Endothelial cell of umbilical vein (primary cell): ENCODE measurements at regions of chr3 and their contacts with region 1.

Region 1: DNA sequence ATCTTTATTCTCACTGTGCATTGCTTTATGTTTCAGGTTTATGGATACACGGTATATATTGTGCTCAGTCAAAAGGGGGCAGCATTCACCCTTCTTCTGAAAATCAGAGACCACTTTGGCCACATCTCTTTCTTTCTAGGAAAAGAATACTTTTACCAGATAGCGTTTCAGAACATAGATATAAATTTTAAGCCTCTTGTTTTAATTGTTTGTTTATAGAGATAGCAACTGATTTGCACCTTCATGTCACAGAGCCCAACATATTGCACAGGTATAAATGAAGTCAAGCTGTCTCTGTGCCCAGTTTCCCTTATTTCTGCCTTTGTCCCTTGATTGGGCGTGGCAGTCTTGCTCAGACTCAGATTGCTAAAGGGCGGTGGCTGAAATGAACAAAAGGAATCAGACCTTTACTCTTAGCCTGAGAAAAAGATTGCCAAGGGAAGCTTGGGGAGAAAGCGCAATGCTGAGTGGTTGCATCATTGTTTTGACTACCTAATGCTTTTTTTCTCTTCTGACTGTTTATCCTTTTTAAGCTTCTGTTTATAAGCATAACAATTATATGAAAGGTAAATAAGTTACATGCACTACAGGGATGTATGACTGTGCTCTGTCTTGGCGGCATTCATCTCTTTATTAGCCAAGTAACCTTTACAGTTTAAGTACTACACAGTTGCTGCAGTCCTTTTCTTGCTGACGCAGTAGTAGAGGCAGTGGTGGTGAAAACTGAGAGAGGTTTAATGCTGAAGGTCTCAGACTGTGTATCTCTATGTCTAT is 70.8 kb upstream of the ZBTB20 start:
- DNase-seq: peak; percentile 75
- H3K4me3 ChIP-seq: peak overlapping the region in 1 of 3 experiments; percentile 12
- H3K27ac ChIP-seq: no peak overlapping the region
- H3K4me1 ChIP-seq: peaks cover 10% of the 10 kb centered on the region
- H3K27me3 ChIP-seq: no peaks in the 10 kb centered on the region
- CTCF ChIP-seq: peak; percentile 44 to 51
- POLR2A ChIP-seq: no peak

Region 2: GRCh38 chr3:114928989-114929640 is 288.8 kb before region 1 on chr3:
- CTCF ChIA-PET with region 1: no interaction called
- POLR2A ChIA-PET with region 1: no interaction called
- dilution Hi-C with region 1: no loop called
- intact Hi-C with region 1: no loop called
- DNase-seq: no peak
- H3K4me3 ChIP-seq: no peak overlapping the region
- H3K27ac ChIP-seq: no peak overlapping the region
- H3K4me1 ChIP-seq: no peaks in the 10 kb centered on the region
- H3K27me3 ChIP-seq: no peaks in the 10 kb centered on the region
- CTCF ChIP-seq: no peak
- POLR2A ChIP-seq: no peak

Region 3: GRCh38 chr3:115239717-115240116 is 21.9 kb after region 1 on chr3:
- CTCF ChIA-PET with region 1: interaction called, 7 read pairs
- POLR2A ChIA-PET with region 1: no interaction called
- dilution Hi-C with region 1: no loop called
- intact Hi-C with region 1: loop called (anchors 2 kb)
- DNase-seq: peak; percentile 99
- H3K4me3 ChIP-seq: no peak overlapping the region
- H3K27ac ChIP-seq: peak overlapping the region; percentile 70
- H3K4me1 ChIP-seq: peaks cover 20% of the 10 kb centered on the region
- H3K27me3 ChIP-seq: no peaks in the 10 kb centered on the region
- CTCF ChIP-seq: no peak
- POLR2A ChIP-seq: no peak

Region 4: GRCh38 chr3:115436767-115437301 is 219.0 kb after region 1 on chr3:
- CTCF ChIA-PET with region 1: interaction called, 5 read pairs
- POLR2A ChIA-PET with region 1: no interaction called
- dilution Hi-C with region 1: no loop called
- intact Hi-C with region 1: loop called (anchors 1 kb)
- DNase-seq: peak; percentile 62
- H3K4me3 ChIP-seq: no peak overlapping the region
- H3K27ac ChIP-seq: peak overlapping the region; percentile 65
- H3K4me1 ChIP-seq: peaks cover 6% of the 10 kb centered on the region
- H3K27me3 ChIP-seq: no peaks in the 10 kb centered on the region
- CTCF ChIP-seq: peak in 1 of 2 donors; percentile 15
- POLR2A ChIP-seq: no peak

Region 5: DNA sequence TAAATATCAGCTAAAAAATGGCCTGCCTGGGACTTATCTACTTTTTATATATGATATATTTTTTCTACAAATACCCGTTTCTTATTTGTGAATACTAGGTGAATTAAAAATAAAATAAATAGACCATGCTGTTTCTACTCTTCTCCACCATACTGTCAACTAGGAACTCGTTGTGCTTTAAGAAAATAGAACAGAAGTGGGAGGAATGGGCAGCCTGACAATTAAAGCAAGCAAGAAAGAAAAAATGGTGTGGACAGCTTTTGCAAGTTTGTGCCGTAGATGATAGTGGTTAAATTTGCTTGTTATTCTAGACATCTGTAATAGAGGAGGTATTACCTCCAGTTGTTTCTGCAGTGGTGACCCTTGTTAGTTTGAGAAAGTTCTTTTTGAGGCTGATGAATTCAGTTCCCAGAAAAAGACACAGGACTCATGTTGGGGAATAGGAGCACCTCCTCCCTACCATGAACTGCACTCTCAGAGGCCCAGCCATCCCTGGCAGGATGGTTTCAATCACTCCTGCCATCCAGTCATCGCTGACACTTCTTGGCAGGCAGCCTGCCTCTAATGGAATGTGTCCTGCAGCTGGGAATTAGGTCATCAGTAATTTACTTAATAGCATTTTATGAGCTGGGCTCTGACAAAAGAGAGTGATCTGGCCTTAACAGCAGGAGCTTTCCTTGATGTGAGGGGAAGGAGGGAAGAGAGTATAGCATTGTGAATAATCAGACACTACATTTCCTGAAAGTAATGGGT is 300.4 kb after region 1 on chr3:
- CTCF ChIA-PET with region 1: interaction called, 4 read pairs
- POLR2A ChIA-PET with region 1: no interaction called
- dilution Hi-C with region 1: no loop called
- intact Hi-C with region 1: loop called (anchors 1 kb)
- DNase-seq: peak; percentile 92
- H3K4me3 ChIP-seq: no peak overlapping the region
- H3K27ac ChIP-seq: peak overlapping the region; percentile 2
- H3K4me1 ChIP-seq: peaks cover 8% of the 10 kb centered on the region
- H3K27me3 ChIP-seq: peaks cover 0 to 1% of the 10 kb centered on the region in 2 experiments
- CTCF ChIP-seq: no peak
- POLR2A ChIP-seq: no peak

Region 6: GRCh38 chr3:115692887-115693524 is 475.1 kb after region 1 on chr3:
- CTCF ChIA-PET with region 1: interaction called, 91 read pairs
- POLR2A ChIA-PET with region 1: no interaction called
- dilution Hi-C with region 1: no loop called
- intact Hi-C with region 1: loop called (anchors 1 kb)
- DNase-seq: peak; percentile 72
- H3K4me3 ChIP-seq: no peak overlapping the region
- H3K27ac ChIP-seq: no peak overlapping the region
- H3K4me1 ChIP-seq: no peaks in the 10 kb centered on the region
- H3K27me3 ChIP-seq: no peaks in the 10 kb centered on the region
- CTCF ChIP-seq: peak; percentile 75 to 77
- POLR2A ChIP-seq: no peak